ENCODE measurements at regions of chr2 and their contacts with region 1.

Region 1: GRCh38 chr2:61470965-61471904 is at the start of gene USP34:
- DNase-seq: peak; percentile 96 to 98
- ATAC-seq: peak; percentile 91 to 93 (median 92)
- H3K4me3 ChIP-seq: peak within 1 kb of the TSS; percentile 94
- H3K27ac ChIP-seq: peak within 1 kb of the TSS; percentile 99
- H3K4me1 ChIP-seq: peaks cover 23% of the 10 kb centered on the region
- H3K27me3 ChIP-seq: no peaks in the 10 kb centered on the region
- CTCF ChIP-seq: no peak
- total RNA-seq, gene USP34: 49.8 to 71.5 (median 53.7) TPM

Region 2: DNA sequence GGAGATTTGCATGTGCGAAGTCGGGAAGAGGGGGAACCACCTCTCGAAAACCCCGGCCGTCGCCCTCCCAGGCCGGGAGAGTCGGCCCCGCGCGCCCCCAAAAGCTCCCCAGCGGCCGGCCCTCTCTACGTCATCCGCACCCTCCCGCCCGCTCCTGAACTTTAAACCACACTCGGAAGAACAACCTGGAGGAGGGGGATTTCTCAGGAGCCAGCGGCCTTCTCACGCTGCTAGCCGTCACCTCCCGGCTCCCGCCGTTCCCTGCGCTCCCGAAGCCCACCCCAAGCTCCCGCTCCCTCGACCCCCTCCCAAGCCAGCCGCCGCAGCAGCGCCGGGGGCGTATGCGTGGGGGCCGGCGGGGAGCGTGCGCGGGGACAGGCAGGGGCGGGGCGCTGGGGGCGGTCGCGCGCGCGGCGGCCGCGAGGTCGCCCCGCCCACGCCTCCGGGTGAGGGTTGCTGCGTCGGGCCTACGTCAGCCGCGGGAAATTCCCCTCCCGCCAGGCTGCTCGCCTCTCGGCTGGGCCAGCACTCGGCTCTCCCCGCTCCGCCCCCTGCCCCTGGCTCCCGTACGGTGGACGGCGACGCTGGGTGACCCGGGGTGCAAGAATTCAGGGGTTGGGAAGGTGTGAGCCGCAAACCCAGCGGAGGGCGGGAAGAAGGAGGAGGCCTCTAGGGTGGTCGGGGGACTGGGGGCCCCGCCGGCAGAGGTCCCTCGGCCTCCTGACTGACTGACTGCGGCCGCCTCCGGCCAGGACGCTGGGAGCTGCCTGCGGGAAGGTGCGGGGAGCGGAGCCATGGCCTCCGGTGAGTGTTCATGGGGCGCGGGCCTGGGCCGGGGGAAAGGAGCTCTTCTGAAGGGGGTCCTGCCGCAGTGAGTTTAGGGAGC is 589.9 kb before region 1 on chr2 and contains the start of gene REL:
- intact Hi-C with region 1: loop called in 1 of 2 experiments (anchors 10 kb)
- DNase-seq: peak; percentile 91 to 95
- ATAC-seq: peak; percentile 94 to 98 (median 97)
- H3K4me3 ChIP-seq: peak within 1 kb of the TSS; percentile 85
- H3K27ac ChIP-seq: peak within 1 kb of the TSS; percentile 94
- H3K4me1 ChIP-seq: peaks cover 21% of the 10 kb centered on the region
- H3K27me3 ChIP-seq: no peaks in the 10 kb centered on the region
- CTCF ChIP-seq: peak; percentile 3
- total RNA-seq, gene REL: 4.0 to 6.9 (median 4.7) TPM

Region 3: GRCh38 chr2:61423716-61424115 is 47.5 kb before region 1 on chr2:
- intact Hi-C with region 1: loop called in 1 of 2 experiments (anchors 5 kb)
- DNase-seq: no peak
- ATAC-seq: peak in 1 of 4 donors; percentile 35
- H3K4me3 ChIP-seq: no peak overlapping the region
- H3K27ac ChIP-seq: peak overlapping the region; percentile 19
- H3K4me1 ChIP-seq: peaks cover 41% of the 10 kb centered on the region
- H3K27me3 ChIP-seq: no peaks in the 10 kb centered on the region
- CTCF ChIP-seq: no peak